Kidney (tissue), 22 donors: ENCODE measurements at regions of chr11 and their contacts with region 1.

Region 1: GRCh38 chr11:86291466-86292262 is 10.4 kb upstream of the HIKESHI start:
- DNase-seq: peak in 3 of 5 donors; percentile 37 to 80 (median 59)
- H3K4me3 ChIP-seq: no peak overlapping the region
- H3K27ac ChIP-seq: no peak overlapping the region
- H3K4me1 ChIP-seq: no peaks in the 10 kb centered on the region
- H3K27me3 ChIP-seq: no peaks in the 10 kb centered on the region
- CTCF ChIP-seq: peak; percentile 49

Region 2: GRCh38 chr11:85854557-85855340 is 436.9 kb before region 1 on chr11:
- intact Hi-C with region 1: loop called (anchors 10 kb)
- DNase-seq: peak; percentile 96 to 98 (median 97)
- H3K4me3 ChIP-seq: peak overlapping the region; percentile 74 to 87 (median 86)
- H3K27ac ChIP-seq: peak overlapping the region; percentile 88 to 92
- H3K4me1 ChIP-seq: peaks cover 0 to 3% (median 0%) of the 10 kb centered on the region in 3 donors
- H3K27me3 ChIP-seq: no peaks in the 10 kb centered on the region
- CTCF ChIP-seq: peak; percentile 76

Region 3: DNA sequence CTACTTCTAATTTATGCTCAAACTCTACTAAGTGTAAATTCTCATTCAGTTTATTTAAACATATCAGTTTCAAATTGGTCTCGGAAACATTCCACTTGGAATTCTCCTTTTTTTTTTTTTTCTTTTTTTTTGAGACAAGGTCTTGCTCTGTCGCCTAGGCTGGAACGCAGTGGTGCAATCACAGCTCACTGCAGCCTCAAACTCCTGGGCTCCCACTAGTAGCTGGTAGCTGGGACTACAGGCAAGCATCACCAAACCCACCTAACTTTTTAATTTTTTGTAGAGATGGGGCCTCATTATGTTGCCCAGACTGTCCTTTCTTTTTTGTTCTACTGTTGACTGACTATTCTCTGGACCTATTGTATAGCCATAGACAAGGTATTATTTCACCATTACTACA is 49.7 kb after region 1 on chr11:
- intact Hi-C with region 1: no loop called
- DNase-seq: no peak
- H3K4me3 ChIP-seq: no peak overlapping the region
- H3K27ac ChIP-seq: no peak overlapping the region
- H3K4me1 ChIP-seq: no peaks in the 10 kb centered on the region
- H3K27me3 ChIP-seq: no peaks in the 10 kb centered on the region
- CTCF ChIP-seq: no peak